Posterior vena cava (tissue), 2 donors: ENCODE measurements at regions of chr3 and their contacts with region 1.

Region 1: DNA sequence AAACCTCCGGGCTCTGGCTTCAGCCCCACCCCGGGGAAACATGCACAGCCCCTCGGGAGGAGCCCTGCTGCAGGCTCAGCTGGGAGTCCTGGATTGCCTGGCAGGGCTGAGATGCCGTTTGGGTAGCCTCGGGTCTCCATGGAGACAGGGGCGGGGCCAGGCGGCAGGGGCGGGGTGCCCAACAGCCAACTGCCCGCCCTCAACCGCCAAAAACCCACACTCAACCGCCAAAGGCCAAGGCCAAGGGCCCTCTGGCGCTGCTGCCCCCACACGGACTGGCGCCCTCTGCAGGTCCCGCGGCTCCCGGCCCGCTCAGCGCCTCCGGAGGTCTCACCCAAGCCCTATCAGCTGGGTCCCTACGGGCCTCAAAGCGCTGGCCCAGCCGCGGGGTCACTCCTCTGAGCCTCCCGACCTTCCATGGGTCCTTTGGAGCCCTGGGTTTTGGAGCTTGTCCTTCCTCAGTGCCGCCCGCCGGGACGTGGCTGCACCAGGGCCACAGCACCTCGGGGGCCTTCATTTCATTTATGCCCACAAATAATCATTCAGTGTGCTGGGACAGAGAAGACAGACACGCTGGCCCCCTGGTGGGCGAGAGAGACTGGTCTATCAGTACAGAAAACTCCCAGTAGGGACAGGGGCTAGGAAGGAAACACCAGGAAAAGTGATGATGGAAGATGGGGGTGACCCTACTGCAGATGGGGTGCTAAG is 33.5 kb upstream of the ACAD9 start:
- DNase-seq: peak; percentile 95

Region 2: DNA sequence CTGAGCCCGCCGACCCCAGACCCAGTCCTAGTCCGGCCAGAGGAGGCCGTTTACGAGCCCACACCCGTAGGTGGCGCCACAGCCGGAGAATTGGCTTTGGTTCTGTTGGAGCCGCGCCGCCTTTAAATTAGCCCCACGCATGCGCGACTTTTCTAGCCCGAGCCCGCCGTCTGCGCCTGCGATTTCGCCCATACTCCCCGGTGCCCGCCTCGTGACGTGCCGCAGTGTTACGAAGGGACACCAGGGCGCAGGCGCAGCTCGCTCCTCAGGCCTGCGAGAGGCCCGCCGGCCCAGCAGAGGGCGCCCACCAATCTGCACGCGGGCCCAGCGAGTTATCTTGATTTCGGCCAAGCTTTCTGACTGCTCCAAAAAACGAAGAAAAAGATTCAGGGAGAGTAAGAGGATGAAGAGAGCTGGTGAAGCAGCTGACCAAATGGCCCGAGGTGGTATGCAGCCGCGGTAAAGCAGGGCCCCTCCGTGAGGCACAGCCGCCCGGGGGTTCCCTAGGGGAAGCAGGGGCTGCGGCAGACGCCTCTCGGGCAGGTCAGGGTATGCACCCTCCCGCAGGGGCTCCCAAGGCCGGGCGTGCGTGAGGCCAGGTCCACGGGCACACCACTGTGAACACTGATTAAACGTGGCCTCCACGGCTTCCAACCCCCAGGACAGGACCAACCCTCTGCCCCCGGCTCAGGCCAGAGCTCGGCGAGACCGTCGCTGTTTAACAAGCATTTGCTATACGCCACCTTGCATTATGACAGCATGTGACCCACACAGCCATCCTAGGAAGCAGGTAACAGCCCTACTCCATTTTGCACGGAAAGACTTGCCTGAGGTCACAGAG is 228.2 kb before region 1 on chr3:
- intact Hi-C with region 1: loop called in 1 of 2 experiments (anchors 5 kb)
- DNase-seq: peak; percentile 100

Region 3: GRCh38 chr3:129039271-129040038 is 193.5 kb after region 1 on chr3:
- intact Hi-C with region 1: loop called in 1 of 2 experiments (anchors 5 kb)
- DNase-seq: peak; percentile 80